Activated CD8-positive, alpha-beta T cell treated with anti-CD3 and anti-CD28 coated beads for 36 hours (primary cell): ENCODE measurements at regions of chr15 and their contacts with region 1.

Region 1: DNA sequence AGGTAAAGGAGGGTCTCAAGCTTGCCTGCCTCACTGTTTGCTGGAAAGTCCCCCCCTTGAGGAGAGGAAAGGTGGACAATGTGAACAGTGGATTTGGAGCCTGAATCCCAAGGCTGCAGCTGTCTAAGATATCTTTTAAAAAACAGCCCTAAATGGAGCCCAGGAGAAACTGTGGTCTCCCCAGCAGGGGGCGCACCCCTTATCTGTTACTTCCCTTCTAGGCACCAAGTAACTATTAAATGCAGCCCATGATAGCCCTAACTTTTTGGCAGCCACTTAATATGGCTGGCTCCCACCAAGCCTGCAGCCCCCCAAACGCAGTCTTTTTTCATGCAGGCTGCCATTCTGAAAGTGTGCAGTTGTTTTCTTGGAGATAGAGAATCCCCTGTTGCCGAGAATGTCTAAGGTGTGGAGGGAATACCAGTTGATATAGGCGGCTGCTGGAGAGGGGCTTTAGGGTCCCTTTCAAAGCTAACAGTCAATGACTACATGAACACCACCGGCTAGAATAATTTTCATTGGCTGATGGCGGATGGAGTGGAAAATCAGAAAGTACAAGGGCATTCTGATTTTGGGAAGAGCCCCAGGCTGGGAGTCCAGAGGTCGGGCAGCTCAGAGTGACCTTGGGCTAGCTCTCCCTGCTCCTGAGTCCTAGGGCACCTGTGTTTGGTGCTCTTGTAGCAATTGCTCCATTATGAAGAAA is 1.3 kb downstream of the RHCG start:
- DNase-seq: peak; percentile 57
- ATAC-seq: no peak
- H3K4me3 Mint-ChIP-seq: no peak overlapping the region
- H3K27ac Mint-ChIP-seq: no peak overlapping the region
- H3K4me1 Mint-ChIP-seq: peaks cover 8% of the 10 kb centered on the region
- H3K27me3 Mint-ChIP-seq: peaks cover 46% of the 10 kb centered on the region
- CTCF ChIP-seq: peak; percentile 50

Region 2: DNA sequence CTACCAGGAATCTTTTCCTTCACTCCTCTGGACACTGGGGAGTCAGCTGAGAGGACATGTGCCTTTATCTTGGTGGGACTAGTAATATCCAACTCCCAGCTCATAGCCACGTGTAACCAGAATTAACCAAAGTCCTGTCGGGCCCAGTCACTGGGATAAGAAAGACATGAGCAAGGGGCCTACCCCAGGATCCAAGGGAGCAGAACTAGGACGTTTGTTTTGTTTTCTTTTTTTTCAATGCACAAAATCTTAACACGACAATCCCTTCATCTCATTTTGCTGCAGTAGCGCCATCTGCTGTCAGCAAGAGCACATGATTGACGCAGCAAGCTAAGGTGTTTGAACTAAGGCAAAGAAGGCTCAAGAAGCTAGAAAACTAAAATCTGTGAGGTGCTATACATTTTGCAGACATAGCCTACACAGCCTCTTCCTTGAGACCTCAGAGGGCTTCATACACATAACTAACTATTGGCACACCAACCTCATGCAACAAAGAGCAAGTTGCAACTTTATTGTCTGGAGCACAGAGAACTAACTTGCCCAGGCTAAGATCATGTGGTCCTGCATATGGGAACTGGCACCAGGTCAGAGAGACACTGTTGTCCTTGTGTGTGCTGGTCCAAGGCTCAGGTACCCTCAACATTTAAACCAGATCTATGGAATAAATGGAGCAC is 317.3 kb before region 1 on chr15:
- CTCF ChIA-PET with region 1: no interaction called
- POLR2A ChIA-PET with region 1: no interaction called
- intact Hi-C with region 1: no loop called
- DNase-seq: peak; percentile 78
- ATAC-seq: peak; percentile 35
- H3K4me3 Mint-ChIP-seq: no peak overlapping the region
- H3K27ac Mint-ChIP-seq: peak overlapping the region; percentile 36
- H3K4me1 Mint-ChIP-seq: peaks cover 35% of the 10 kb centered on the region
- H3K27me3 Mint-ChIP-seq: no peaks in the 10 kb centered on the region
- CTCF ChIP-seq: peak; percentile 83

Region 3: GRCh38 chr15:89436570-89437316 is 58.3 kb before region 1 on chr15:
- CTCF ChIA-PET with region 1: no interaction called
- POLR2A ChIA-PET with region 1: no interaction called
- intact Hi-C with region 1: no loop called
- DNase-seq: no peak
- ATAC-seq: no peak
- H3K4me3 Mint-ChIP-seq: no peak overlapping the region
- H3K27ac Mint-ChIP-seq: no peak overlapping the region
- H3K4me1 Mint-ChIP-seq: no peaks in the 10 kb centered on the region
- H3K27me3 Mint-ChIP-seq: peaks cover 25% of the 10 kb centered on the region
- CTCF ChIP-seq: no peak

Region 4: DNA sequence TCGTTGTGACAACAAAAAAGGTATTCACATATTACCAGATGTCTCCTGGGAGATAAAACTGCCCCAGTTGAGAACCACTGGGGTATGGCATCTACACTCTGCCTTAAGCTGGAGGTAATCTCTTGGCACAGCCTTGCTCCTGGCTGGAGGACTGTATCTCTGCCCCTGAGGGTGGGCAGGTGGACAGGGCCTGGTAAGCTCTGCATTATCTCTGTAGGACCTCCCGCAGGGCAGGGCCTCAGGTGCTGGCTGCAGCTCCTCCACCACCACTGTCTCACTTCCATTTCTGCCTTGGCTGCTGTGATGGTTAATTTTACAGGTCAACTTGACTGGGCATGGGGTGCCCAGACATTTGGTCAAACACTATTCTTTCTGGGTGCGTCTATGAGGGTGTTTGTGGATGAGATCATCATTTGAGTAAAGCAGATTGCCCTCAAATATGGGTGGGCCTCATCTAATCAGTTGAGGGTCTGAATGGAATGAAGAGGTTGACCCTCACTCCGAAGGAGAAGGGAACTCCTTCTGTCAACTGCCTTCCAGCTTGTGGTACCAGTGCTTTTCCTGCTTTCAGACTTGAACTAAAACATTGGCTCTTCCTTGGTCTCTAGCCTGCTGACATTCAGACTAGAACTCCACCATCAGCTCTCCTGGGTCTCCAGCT is 11.1 kb after region 1 on chr15:
- CTCF ChIA-PET with region 1: no interaction called
- POLR2A ChIA-PET with region 1: no interaction called
- intact Hi-C with region 1: no loop called
- DNase-seq: no peak
- ATAC-seq: no peak
- H3K4me3 Mint-ChIP-seq: no peak overlapping the region
- H3K27ac Mint-ChIP-seq: no peak overlapping the region
- H3K4me1 Mint-ChIP-seq: no peaks in the 10 kb centered on the region
- H3K27me3 Mint-ChIP-seq: peaks cover 20% of the 10 kb centered on the region
- CTCF ChIP-seq: no peak

Region 5: DNA sequence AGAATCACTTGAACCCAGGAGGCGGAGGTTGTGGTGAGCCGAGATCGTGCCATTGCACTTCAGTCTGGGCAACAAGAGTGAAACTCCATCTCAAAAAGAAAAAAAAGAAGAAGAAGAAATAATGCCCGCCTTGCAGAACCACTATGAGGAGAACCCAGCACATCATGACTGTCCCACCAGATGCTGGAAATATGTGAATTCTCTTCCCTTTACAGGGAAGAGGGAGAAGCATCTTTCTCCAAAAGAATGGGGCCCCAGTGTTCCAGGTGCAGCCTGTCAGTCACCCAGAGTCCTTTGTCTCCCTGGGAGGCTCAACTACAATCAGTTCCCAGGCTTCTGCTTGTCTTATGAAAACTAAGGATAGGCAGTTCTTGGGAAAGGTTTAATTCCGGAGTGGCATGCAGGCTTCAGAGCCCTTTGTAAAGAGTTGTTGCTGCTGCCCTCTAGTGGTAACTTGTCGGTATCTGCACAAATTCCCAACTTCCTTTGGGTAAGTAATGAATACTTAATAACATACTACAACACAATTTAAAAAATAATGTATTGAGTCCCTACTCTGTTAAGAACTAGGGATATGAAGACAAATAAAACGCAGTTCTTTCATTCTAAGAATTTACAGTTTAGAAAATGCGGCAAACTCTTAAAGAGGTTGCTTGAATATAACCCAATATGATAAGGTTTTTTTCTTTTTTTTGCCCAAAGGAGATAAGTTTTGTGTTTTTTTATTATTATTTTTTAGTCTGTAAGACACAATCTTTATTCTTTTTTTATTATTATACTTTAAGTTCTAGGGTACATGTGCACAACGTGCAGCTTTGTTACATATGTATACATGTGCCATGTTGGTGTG is 61.6 kb after region 1 on chr15:
- CTCF ChIA-PET with region 1: interaction called, 3 read pairs
- POLR2A ChIA-PET with region 1: no interaction called
- intact Hi-C with region 1: loop called (anchors 5 kb)
- DNase-seq: peak; percentile 52
- ATAC-seq: no peak
- H3K4me3 Mint-ChIP-seq: no peak overlapping the region
- H3K27ac Mint-ChIP-seq: no peak overlapping the region
- H3K4me1 Mint-ChIP-seq: no peaks in the 10 kb centered on the region
- H3K27me3 Mint-ChIP-seq: peaks cover 1% of the 10 kb centered on the region
- CTCF ChIP-seq: peak; percentile 82